Naive thymus-derived CD4-positive, alpha-beta T cell (primary cell): ENCODE measurements at regions of chr4 and their contacts with region 1.

Region 1: DNA sequence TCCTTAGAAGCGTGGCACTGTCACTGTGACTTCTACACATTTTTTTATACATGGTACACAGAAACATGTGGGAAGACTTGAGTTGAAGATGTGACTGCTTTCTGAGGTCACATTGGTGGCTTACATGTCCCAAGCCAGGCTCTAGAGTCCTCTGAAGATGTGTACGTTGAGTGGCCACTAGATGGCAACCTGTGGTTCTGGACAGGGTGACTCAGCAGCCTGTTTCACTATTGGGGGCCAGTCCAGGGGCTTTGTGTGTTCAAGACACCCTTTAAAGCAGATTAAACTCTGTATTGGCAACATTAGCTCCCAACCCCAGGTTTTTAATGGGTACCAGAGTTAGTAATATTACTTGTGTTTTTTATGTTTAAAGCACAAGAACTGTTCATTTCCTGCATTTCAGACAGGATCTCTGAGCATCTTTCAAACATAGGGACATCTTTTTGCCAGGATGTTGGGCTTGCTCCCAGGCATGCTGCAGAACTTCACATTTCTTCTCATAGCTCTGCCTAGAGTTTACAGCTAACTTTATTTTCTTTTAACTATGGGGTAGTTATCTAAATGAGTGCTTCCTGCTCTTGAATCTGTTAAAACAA is 53.0 kb downstream of the DCUN1D4 start:
- DNase-seq: peak in 7 of 9 donors; percentile 13 to 37 (median 24)
- ATAC-seq: peak; percentile 92
- H3K4me3 ChIP-seq: no peak overlapping the region
- H3K4me3 Mint-ChIP-seq: no peak overlapping the region
- H3K27ac ChIP-seq: no peak overlapping the region
- H3K27ac Mint-ChIP-seq: peak overlapping the region in 1 of 9 donors; percentile 29
- H3K4me1 ChIP-seq: no peaks in the 10 kb centered on the region
- H3K4me1 Mint-ChIP-seq: peaks cover 0 to 15% (median 0%) of the 10 kb centered on the region in 7 donors
- H3K27me3 ChIP-seq: no peaks in the 10 kb centered on the region
- H3K27me3 Mint-ChIP-seq: no peaks in the 10 kb centered on the region

Region 2: GRCh38 chr4:51820443-51821234 is 75.3 kb before region 1 on chr4:
- CTCF ChIA-PET with region 1: no interaction called
- POLR2A ChIA-PET with region 1: no interaction called
- intact Hi-C with region 1: no loop called
- DNase-seq: no peak
- ATAC-seq: no peak
- H3K4me3 ChIP-seq: no peak overlapping the region
- H3K4me3 Mint-ChIP-seq: no peak overlapping the region
- H3K27ac ChIP-seq: no peak overlapping the region
- H3K27ac Mint-ChIP-seq: peak overlapping the region in 1 of 9 donors; percentile 48
- H3K4me1 ChIP-seq: no peaks in the 10 kb centered on the region
- H3K4me1 Mint-ChIP-seq: no peaks in the 10 kb centered on the region
- H3K27me3 ChIP-seq: no peaks in the 10 kb centered on the region
- H3K27me3 Mint-ChIP-seq: no peaks in the 10 kb centered on the region

Region 3: GRCh38 chr4:51831133-51831532 is 64.8 kb before region 1 on chr4:
- CTCF ChIA-PET with region 1: no interaction called
- POLR2A ChIA-PET with region 1: no interaction called
- intact Hi-C with region 1: loop called in 1 of 2 experiments (anchors 1 kb)
- DNase-seq: peak; percentile 39 to 70 (median 58)
- ATAC-seq: peak; percentile 77
- H3K4me3 ChIP-seq: no peak overlapping the region
- H3K4me3 Mint-ChIP-seq: no peak overlapping the region
- H3K27ac ChIP-seq: no peak overlapping the region
- H3K27ac Mint-ChIP-seq: no peak overlapping the region
- H3K4me1 ChIP-seq: no peaks in the 10 kb centered on the region
- H3K4me1 Mint-ChIP-seq: no peaks in the 10 kb centered on the region
- H3K27me3 ChIP-seq: no peaks in the 10 kb centered on the region
- H3K27me3 Mint-ChIP-seq: peaks cover 0 to 15% (median 7%) of the 10 kb centered on the region in 5 donors

Region 4: GRCh38 chr4:52028969-52029368 is 133.1 kb after region 1 on chr4:
- CTCF ChIA-PET with region 1: no interaction called
- POLR2A ChIA-PET with region 1: no interaction called
- intact Hi-C with region 1: loop called (anchors 1 kb)
- DNase-seq: no peak
- ATAC-seq: no peak
- H3K4me3 ChIP-seq: no peak overlapping the region
- H3K4me3 Mint-ChIP-seq: no peak overlapping the region
- H3K27ac ChIP-seq: no peak overlapping the region
- H3K27ac Mint-ChIP-seq: no peak overlapping the region
- H3K4me1 ChIP-seq: no peaks in the 10 kb centered on the region
- H3K4me1 Mint-ChIP-seq: peaks cover 0 to 5% (median 0%) of the 10 kb centered on the region in 7 donors
- H3K27me3 ChIP-seq: no peaks in the 10 kb centered on the region
- H3K27me3 Mint-ChIP-seq: no peaks in the 10 kb centered on the region

Region 5: GRCh38 chr4:52659001-52659721 is 763.2 kb after region 1 on chr4 and contains the start of gene USP46:
- CTCF ChIA-PET with region 1: no interaction called
- POLR2A ChIA-PET with region 1: no interaction called
- intact Hi-C with region 1: loop called (anchors 2 kb)
- DNase-seq: peak in 7 of 9 donors; percentile 3 to 65 (median 15)
- ATAC-seq: peak; percentile 86
- H3K4me3 ChIP-seq: peak within 1 kb of the TSS; percentile 52
- H3K4me3 Mint-ChIP-seq: peak within 1 kb of the TSS; percentile 83 to 92 (median 87)
- H3K27ac ChIP-seq: peak within 1 kb of the TSS; percentile 37
- H3K27ac Mint-ChIP-seq: peak within 1 kb of the TSS in 6 of 9 donors; percentile 12 to 77 (median 58)
- H3K4me1 ChIP-seq: peaks cover 5% of the 10 kb centered on the region in 2 donors
- H3K4me1 Mint-ChIP-seq: peaks cover 12 to 23% (median 17%) of the 10 kb centered on the region in 7 donors
- H3K27me3 ChIP-seq: no peaks in the 10 kb centered on the region
- H3K27me3 Mint-ChIP-seq: peaks cover 0 to 24% (median 16%) of the 10 kb centered on the region in 5 donors
- total RNA-seq, gene USP46: 3.0 to 11.7 (median 4.0) TPM

Region 6: DNA sequence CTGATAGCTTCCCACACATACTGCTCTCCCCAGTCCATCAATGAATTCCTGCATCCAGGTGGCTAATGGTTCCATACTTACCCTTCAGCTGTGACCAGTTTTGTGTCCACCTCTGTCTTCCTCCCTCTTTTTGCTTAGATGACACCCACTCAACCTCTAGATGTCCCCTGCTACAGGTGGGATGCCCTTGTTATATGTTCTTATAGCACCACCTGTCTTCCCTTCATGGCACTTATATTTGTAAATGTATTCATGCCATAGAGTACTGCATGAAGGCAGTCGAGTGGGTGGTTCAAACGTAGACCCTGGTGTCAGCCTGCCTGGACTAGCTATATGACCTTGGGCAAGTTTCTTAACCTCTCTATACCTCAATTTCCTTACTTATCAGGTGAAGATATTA is 769.7 kb after region 1 on chr4:
- CTCF ChIA-PET with region 1: no interaction called
- POLR2A ChIA-PET with region 1: no interaction called
- intact Hi-C with region 1: loop called in 1 of 2 experiments (anchors 2 kb)
- DNase-seq: peak in 1 of 9 donors; percentile 0
- ATAC-seq: peak; percentile 50
- H3K4me3 ChIP-seq: no peak overlapping the region
- H3K4me3 Mint-ChIP-seq: no peak overlapping the region
- H3K27ac ChIP-seq: no peak overlapping the region
- H3K27ac Mint-ChIP-seq: peak overlapping the region in 1 of 9 donors; percentile 32
- H3K4me1 ChIP-seq: peaks cover 0 to under 1% of the 10 kb centered on the region in 2 donors
- H3K4me1 Mint-ChIP-seq: peaks cover 2 to 9% (median 3%) of the 10 kb centered on the region in 7 donors
- H3K27me3 ChIP-seq: no peaks in the 10 kb centered on the region
- H3K27me3 Mint-ChIP-seq: peaks cover 30 to 62% (median 43%) of the 10 kb centered on the region in 5 donors